ENCODE measurements at regions of chr16 and their contacts with region 1.

Region 1: GRCh38 chr16:69123910-69124309 is 8.5 kb downstream of the CHTF8 start:
- DNase-seq: peak; percentile 73
- ATAC-seq: peak; percentile 14; the same call in 1 of the 2 replicates
- H3K4me3 ChIP-seq: no peak overlapping the region
- H3K27ac ChIP-seq: no peak overlapping the region
- H3K4me1 ChIP-seq: no peaks in the 10 kb centered on the region
- H3K27me3 ChIP-seq: no peaks in the 10 kb centered on the region
- CTCF ChIP-seq: peak; percentile 72

Region 2: GRCh38 chr16:68486502-68487202 is 637.3 kb before region 1 on chr16:
- CTCF ChIA-PET with region 1: no interaction called
- POLR2A ChIA-PET with region 1: interaction called, 12 read pairs
- intact Hi-C with region 1: no loop called
- DNase-seq: no peak
- ATAC-seq: no peak
- H3K4me3 ChIP-seq: no peak overlapping the region
- H3K27ac ChIP-seq: no peak overlapping the region
- H3K4me1 ChIP-seq: peaks cover 14% of the 10 kb centered on the region
- H3K27me3 ChIP-seq: no peaks in the 10 kb centered on the region
- CTCF ChIP-seq: no peak

Region 3: DNA sequence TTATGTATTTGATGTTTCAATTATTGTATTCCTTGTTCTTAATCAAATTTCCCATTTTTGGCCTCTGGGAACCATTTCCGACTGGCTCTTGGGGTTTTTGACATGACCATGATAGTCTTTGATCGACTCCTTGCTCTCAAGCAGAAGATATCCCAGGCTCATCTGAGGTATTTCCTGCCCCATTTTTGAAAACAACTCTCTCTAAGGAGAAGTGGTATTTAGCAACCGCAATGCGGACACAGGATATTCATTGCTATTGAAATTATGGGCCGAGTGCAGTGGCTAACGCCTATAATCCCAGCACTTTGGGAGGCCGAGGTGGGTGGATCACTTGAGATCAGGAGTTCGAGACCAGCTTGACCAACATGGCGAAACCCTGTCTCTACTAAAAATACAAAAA is 275.1 kb before region 1 on chr16:
- CTCF ChIA-PET with region 1: interaction called, 3 read pairs
- POLR2A ChIA-PET with region 1: no interaction called
- intact Hi-C with region 1: loop called (anchors 5 kb)
- DNase-seq: no peak
- ATAC-seq: no peak
- H3K4me3 ChIP-seq: no peak overlapping the region
- H3K27ac ChIP-seq: no peak overlapping the region
- H3K4me1 ChIP-seq: peaks cover 6% of the 10 kb centered on the region
- H3K27me3 ChIP-seq: no peaks in the 10 kb centered on the region
- CTCF ChIP-seq: no peak

Region 4: DNA sequence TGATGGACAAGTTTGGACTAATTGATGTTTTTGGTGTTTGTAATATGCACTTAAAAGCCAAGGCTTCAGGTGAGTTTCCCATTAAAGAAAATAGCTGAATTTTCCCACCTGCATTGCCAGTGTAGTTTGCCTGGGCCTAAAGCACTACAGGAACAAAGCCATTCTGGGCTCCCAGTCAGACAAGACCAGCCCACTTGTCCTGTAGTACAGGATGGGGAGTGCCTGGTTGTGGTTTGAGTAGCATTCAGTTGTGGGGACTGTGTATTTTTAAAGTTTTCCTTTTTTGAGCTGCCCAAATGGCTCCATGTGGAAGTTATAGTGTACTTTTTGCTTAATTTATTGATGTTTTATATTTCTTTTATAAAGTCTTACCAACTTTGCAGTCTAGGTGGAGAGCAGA is 188.9 kb before region 1 on chr16:
- CTCF ChIA-PET with region 1: no interaction called
- POLR2A ChIA-PET with region 1: no interaction called
- intact Hi-C with region 1: no loop called
- DNase-seq: no peak
- ATAC-seq: no peak
- H3K4me3 ChIP-seq: no peak overlapping the region
- H3K27ac ChIP-seq: no peak overlapping the region
- H3K4me1 ChIP-seq: peaks cover 8% of the 10 kb centered on the region
- H3K27me3 ChIP-seq: no peaks in the 10 kb centered on the region
- CTCF ChIP-seq: no peak

Region 5: GRCh38 chr16:68978271-68978954 is 145.5 kb before region 1 on chr16:
- CTCF ChIA-PET with region 1: interaction called, 16 read pairs
- POLR2A ChIA-PET with region 1: no interaction called
- intact Hi-C with region 1: no loop called
- DNase-seq: no peak
- ATAC-seq: no peak
- H3K4me3 ChIP-seq: no peak overlapping the region
- H3K27ac ChIP-seq: no peak overlapping the region
- H3K4me1 ChIP-seq: no peaks in the 10 kb centered on the region
- H3K27me3 ChIP-seq: no peaks in the 10 kb centered on the region
- CTCF ChIP-seq: no peak